ENCODE measurements at regions of chr7 and their contacts with region 1.

Region 1: DNA sequence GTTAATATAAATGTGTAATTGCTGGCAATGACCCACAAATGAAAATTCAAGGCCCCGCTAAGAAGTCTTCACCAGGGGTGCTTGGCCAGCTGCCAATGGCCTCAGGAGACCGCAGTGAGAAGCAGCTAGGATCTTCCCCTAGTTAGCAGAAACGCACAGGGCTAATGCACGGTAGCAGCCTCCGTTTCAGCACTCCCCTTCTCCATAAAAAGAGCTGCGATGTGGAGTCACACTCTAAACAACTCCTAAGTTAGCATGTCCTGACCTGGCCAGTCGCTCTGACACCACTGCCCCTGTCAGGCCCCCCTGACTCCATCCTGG is 139.0 kb downstream of the SEPTIN14 start:
- DNase-seq: no peak
- H3K4me3 ChIP-seq: no peak overlapping the region
- H3K27ac ChIP-seq: no peak overlapping the region
- H3K4me1 ChIP-seq: no peaks in the 10 kb centered on the region
- H3K27me3 ChIP-seq: no peaks in the 10 kb centered on the region
- CTCF ChIP-seq: no peak
- EP300 ChIP-seq: no peak
- POLR2A ChIP-seq: no peak
- RAD21 ChIP-seq: no peak

Region 2: GRCh38 chr7:55641273-55641691 is 82.3 kb before region 1 on chr7:
- CTCF ChIA-PET with region 1: interaction called, 14 read pairs
- POLR2A ChIA-PET with region 1: no interaction called
- DNase-seq: peak in 1 of 2 experiments; percentile 13
- H3K4me3 ChIP-seq: no peak overlapping the region
- H3K27ac ChIP-seq: no peak overlapping the region
- H3K4me1 ChIP-seq: no peaks in the 10 kb centered on the region
- H3K27me3 ChIP-seq: no peaks in the 10 kb centered on the region
- CTCF ChIP-seq: peak in 2 of 3 experiments; percentile 77 to 82; a peak in 3 of 4 replicates
- EP300 ChIP-seq: no peak
- POLR2A ChIP-seq: no peak
- RAD21 ChIP-seq: peak; percentile 96 to 97

Region 3: DNA sequence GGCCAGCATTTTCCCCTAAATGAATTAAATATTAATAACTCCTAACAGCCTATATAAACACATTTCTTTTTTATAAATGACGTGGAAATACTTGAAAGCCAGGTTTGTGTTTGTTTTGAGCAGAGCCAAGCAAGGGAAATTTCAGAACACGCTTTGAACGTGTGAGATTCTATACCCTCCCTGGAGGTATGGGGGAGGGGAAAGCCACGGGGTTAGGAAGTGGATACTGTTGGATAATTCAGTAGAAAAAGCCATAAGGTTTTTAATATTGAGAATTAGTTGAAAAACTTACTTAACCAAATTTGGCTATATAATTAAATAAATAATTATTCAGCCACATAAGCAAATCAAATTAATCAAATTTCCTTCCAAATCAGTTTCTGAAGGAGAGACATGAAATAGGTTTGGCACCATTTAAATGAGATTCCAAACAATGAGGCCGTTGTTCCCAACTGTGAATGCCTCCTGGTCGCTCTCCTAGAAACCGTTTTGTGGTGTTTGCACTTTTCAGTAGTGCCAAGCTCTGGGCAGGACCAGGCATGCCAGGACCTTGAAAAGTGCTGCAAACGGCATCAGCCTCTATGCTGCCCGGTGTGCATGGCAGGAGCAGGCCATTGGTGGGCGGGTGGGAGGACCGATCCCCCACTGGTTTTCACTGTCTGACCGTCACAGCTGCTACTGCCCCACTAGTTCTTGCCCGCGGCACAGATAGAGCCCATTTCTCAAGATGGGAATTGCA is 50.9 kb after region 1 on chr7:
- CTCF ChIA-PET with region 1: no interaction called
- POLR2A ChIA-PET with region 1: no interaction called
- DNase-seq: peak in 1 of 2 experiments; percentile 53
- H3K4me3 ChIP-seq: peak overlapping the region in 3 of 4 experiments; percentile 17 to 46 (median 24); a peak in 4 of 8 replicates
- H3K27ac ChIP-seq: no peak overlapping the region
- H3K4me1 ChIP-seq: peaks cover 0 to 5% (median 0%) of the 10 kb centered on the region in 4 experiments; a peak in 3 of 7 replicates
- H3K27me3 ChIP-seq: no peaks in the 10 kb centered on the region
- CTCF ChIP-seq: no peak
- EP300 ChIP-seq: no peak
- POLR2A ChIP-seq: no peak
- RAD21 ChIP-seq: no peak

Measured in H1 (cell line).